Head of caudate nucleus (tissue), 42 donors: ENCODE measurements at regions of chr12 and their contacts with region 1.

Region 1: DNA sequence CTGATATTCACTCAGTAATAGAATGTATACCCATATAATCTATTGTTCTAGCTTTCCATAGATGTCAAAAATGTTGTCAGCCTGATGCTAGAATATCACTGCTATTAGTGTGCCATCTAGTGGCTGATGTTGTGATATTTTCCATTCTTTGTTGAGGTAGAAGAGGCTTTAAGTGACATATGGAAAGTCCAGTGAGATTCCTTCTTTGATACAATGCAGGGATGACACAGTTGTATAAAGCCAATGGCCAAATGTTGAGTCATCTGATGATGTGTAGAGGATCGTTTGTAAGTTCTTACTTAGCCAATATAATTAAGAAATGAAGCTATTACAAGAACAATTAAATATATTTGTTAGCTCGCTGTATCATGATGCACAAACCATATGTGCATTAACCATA is 58.1 kb upstream of the PCED1B start:
- DNase-seq: peak in 9 of 42 donors; percentile 11 to 64 (median 22)

Region 2: DNA sequence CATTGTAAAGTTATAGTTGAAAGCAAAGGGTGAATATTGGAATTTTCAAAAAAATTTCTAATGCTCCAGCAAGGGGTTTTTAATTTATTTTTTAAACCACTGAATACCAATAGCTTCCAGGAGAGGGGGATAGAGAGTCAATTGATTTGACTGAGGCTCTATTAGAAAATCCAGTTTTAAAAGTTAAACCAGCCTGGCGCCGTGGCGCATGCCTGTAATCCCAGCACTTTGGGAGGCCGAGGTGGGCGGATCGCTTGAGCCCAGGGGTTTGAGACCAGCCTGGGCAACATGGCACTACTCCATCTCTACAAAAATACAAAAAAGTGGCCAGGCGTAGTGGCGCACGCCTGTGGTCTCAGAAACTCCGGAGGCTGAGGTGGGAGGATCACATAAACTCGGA is 345.6 kb before region 1 on chr12:
- intact Hi-C with region 1: loop called (anchors 10 kb)
- DNase-seq: peak in 9 of 42 donors; percentile 7 to 44 (median 15)